B cell (primary cell): ENCODE measurements at regions of chr15 and their contacts with region 1.

Region 1: GRCh38 chr15:84633311-84634227 is 20.5 kb downstream of the WDR73 start:
- DNase-seq: peak; percentile 82
- ATAC-seq: peak; percentile 56
- H3K4me3 ChIP-seq: peak overlapping the region; percentile 61 to 71 (median 65)
- H3K4me3 Mint-ChIP-seq: peak overlapping the region; percentile 97
- H3K27ac ChIP-seq: peak overlapping the region; percentile 50 to 71
- H3K27ac Mint-ChIP-seq: peak overlapping the region; percentile 95
- H3K4me1 ChIP-seq: peaks cover 26 to 41% of the 10 kb centered on the region in 2 donors
- H3K4me1 Mint-ChIP-seq: peaks cover 41% of the 10 kb centered on the region
- H3K27me3 ChIP-seq: no peaks in the 10 kb centered on the region
- H3K27me3 Mint-ChIP-seq: no peaks in the 10 kb centered on the region
- CTCF ChIP-seq: no peak

Region 2: GRCh38 chr15:84600851-84601838 is 32.4 kb before region 1 on chr15 and contains the start of gene ZSCAN2:
- CTCF ChIA-PET with region 1: interaction called, 10 read pairs
- POLR2A ChIA-PET with region 1: interaction called, 15 read pairs
- intact Hi-C with region 1: loop called (anchors 1 kb)
- DNase-seq: peak; percentile 93
- ATAC-seq: peak; percentile 94
- H3K4me3 ChIP-seq: peak within 1 kb of the TSS; percentile 78 to 95 (median 86)
- H3K4me3 Mint-ChIP-seq: peak within 1 kb of the TSS; percentile 99
- H3K27ac ChIP-seq: peak within 1 kb of the TSS; percentile 32 to 47
- H3K27ac Mint-ChIP-seq: peak within 1 kb of the TSS; percentile 96
- H3K4me1 ChIP-seq: peaks cover 29 to 52% of the 10 kb centered on the region in 2 donors
- H3K4me1 Mint-ChIP-seq: peaks cover 64% of the 10 kb centered on the region
- H3K27me3 ChIP-seq: no peaks in the 10 kb centered on the region
- H3K27me3 Mint-ChIP-seq: no peaks in the 10 kb centered on the region
- CTCF ChIP-seq: no peak
- total RNA-seq, gene ZSCAN2: 16.2 and 18.6 TPM in 2 replicates

Region 3: DNA sequence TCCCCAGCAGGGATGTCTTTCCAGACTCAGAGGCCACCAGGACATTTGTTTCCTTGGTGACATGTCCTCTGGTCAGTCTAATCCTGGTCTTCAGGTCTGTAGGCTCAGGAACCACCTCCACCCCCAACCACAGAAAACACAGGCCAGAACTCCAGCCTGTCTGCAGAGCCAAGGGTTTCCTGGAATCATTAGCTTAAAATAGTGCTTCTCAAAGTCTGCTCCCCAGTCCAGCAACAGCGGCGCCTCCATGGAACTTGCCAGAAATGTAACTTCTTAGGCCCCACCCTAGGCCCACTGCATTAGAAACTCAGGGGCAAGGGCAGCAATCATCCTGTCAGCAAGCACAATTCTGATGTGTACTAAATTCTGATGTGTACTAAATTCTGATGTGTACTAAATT is 270.9 kb after region 1 on chr15:
- CTCF ChIA-PET with region 1: no interaction called
- POLR2A ChIA-PET with region 1: no interaction called
- intact Hi-C with region 1: no loop called
- DNase-seq: no peak
- ATAC-seq: no peak
- H3K4me3 ChIP-seq: no peak overlapping the region
- H3K4me3 Mint-ChIP-seq: no peak overlapping the region
- H3K27ac ChIP-seq: no peak overlapping the region
- H3K27ac Mint-ChIP-seq: no peak overlapping the region
- H3K4me1 ChIP-seq: no peaks in the 10 kb centered on the region
- H3K4me1 Mint-ChIP-seq: no peaks in the 10 kb centered on the region
- H3K27me3 ChIP-seq: no peaks in the 10 kb centered on the region
- H3K27me3 Mint-ChIP-seq: peaks cover 4% of the 10 kb centered on the region
- CTCF ChIP-seq: no peak